ENCODE measurements at regions of chr20 and their contacts with region 1.

Region 1: DNA sequence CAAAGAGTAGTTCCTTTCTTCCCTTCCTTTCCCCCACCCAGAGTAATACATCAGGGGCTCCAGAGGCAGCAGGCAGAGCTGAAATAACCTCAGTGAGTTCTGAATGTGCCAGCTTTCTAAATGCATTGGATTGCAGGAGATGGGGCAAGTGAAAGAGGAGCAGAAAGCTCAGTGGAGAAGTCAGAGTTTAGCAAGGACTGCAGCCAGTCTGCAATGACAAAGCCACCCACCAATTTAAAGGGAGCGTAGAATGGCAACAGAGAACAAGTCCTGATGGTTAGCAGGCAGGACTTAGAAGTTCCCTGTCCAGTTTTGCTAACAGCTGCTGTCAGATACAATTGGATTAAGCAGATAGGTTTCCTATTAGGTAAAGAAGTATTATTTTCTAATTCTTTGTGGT is 203.4 kb upstream of the RIN2 start:
- DNase-seq: no peak
- H3K4me3 ChIP-seq: no peak overlapping the region
- H3K27ac ChIP-seq: no peak overlapping the region
- H3K4me1 ChIP-seq: no peaks in the 10 kb centered on the region
- H3K27me3 ChIP-seq: no peaks in the 10 kb centered on the region
- CTCF ChIP-seq: no peak

Region 2: DNA sequence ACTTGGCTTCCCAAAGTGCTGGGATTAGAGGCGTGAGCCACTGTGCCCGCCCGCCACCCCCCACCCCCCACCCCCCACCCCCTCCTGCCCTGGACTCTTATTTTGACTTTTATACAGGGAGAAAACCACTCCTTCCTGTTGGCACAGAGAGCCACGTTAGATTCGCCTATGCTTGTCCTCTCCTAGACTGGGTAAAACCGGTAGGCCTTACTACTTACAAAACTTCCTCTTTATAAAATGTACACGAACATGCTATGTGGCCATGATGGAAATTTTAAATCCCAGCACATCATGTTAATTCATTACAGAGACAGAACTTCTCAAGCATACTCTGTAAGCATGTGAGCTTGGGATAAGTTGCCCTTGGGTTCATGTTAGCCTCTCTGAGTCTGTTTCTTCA is 218.0 kb before region 1 on chr20:
- CTCF ChIA-PET with region 1: no interaction called
- dilution Hi-C with region 1: no loop called
- in situ Hi-C with region 1: no loop called
- intact Hi-C with region 1: no loop called
- DNase-seq: no peak
- H3K4me3 ChIP-seq: no peak overlapping the region
- H3K27ac ChIP-seq: no peak overlapping the region
- H3K4me1 ChIP-seq: no peaks in the 10 kb centered on the region
- H3K27me3 ChIP-seq: no peaks in the 10 kb centered on the region
- CTCF ChIP-seq: no peak

Region 3: DNA sequence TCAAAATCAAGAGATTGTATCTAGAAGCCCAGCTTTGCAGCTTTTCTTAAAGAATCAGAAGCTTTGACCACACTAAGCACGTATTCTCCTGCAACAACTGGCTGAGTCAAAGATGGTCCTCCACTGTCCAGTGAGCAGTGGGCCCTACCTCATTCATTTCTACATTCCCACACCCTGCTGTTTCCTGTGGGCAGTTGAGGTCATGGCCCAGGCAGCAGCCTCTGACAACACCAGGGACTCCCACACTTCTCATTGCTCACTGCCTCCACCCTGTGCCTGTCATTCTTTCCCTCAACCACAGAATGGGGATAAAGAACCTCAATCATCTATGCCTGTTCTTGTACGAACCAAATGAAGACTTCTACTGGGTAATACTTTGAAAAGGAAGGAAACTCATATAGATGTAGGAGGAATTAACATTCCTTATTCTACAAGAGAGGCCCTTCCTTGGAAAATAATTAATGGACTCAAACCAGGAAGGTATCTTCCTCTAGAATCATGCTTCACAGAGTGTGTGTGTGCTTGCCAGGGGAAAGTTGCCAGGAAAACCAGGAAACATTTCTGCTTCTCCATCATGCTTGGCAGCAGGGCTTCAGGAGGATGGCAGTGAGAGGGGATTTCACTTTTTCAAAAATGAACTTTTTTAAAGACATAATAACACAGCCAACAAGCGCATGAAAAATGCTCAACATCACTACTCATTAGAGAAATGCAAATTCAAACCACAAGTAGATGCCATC is 11.7 kb after region 1 on chr20:
- CTCF ChIA-PET with region 1: interaction called, 15 read pairs
- dilution Hi-C with region 1: no loop called
- in situ Hi-C with region 1: no loop called
- intact Hi-C with region 1: no loop called
- DNase-seq: no peak
- H3K4me3 ChIP-seq: no peak overlapping the region
- H3K27ac ChIP-seq: no peak overlapping the region
- H3K4me1 ChIP-seq: no peaks in the 10 kb centered on the region
- H3K27me3 ChIP-seq: no peaks in the 10 kb centered on the region
- CTCF ChIP-seq: no peak

Measured in mammary epithelial cell (primary cell).